CD8-positive, alpha-beta T cell (primary cell): ENCODE measurements at regions of chr7 and their contacts with region 1.

Region 1: DNA sequence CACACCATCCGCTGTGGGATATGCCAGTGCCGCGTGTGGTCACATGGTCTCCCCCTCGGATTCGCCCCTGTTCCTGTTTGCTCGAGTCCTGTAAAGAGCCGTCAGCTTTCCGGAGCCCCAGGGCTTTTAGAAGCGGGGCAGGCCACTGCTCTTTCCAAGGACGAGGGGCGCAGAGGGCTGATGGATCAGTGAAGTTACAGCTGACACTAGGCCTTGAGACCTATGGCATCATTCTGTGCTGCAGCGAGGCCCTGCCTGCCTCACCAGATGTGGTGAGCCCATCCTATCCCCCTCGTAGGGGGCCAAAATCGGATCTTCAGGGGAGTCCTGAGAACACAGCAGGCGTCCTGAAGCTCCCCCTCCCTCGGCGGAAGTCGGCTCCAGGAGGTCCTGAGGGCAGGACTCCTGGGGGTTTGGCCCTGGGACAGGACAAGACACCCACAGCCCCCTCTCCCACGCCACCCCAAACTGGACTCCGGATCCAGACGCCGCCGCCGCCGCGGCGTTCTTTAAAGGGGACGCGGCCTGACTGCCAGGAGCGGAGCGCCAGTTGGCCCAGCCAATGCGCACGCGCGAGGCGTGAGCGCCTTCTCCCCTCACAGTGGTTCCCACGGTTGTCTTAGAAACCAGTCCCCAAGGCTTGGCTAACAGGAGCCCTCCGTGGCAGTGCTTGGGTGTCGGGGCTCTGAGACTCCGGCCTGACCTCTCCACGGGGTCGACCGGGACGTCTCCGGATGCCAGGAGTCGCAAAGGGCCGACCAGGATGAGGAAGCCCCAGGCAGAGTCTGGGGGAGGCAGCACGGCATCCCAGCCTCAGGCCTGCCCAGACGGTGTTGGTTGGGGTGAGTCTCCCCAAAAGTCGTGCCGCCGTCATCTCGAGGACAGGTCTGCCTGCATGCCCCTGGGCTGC is 371.7 kb downstream of the ZNF716 start:
- DNase-seq: no peak
- ATAC-seq: no peak
- H3K4me3 ChIP-seq: no peak overlapping the region
- H3K4me3 Mint-ChIP-seq: no peak overlapping the region
- H3K27ac ChIP-seq: no peak overlapping the region
- H3K27ac Mint-ChIP-seq: no peak overlapping the region
- H3K4me1 ChIP-seq: no peaks in the 10 kb centered on the region
- H3K4me1 Mint-ChIP-seq: no peaks in the 10 kb centered on the region
- H3K27me3 ChIP-seq: no peaks in the 10 kb centered on the region
- H3K27me3 Mint-ChIP-seq: no peaks in the 10 kb centered on the region
- CTCF ChIP-seq: no peak

Region 2: DNA sequence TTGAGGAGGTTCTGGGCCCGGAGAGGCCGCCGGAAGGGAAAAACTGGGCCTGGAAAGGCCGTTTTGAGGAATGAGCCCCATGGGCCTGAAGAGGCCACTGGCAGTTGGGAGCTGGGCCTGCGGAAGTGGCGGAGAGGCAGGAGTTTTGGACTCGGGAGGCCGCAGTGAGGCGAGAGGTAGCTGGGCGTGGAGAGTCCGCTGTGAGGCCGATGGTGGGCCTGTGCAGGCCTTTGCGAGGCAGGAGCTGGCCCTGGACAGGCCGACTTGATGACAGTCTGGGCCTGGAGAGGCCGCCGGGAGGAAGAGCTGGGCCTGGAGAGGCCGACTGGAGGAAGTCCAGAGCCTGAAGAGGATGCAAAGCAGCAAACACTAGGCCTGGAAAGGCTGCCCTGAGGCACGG is 1446.5 kb before region 1 on chr7:
- CTCF ChIA-PET with region 1: no interaction called
- POLR2A ChIA-PET with region 1: no interaction called
- intact Hi-C with region 1: no loop called
- DNase-seq: no peak
- ATAC-seq: no peak
- H3K4me3 ChIP-seq: no peak overlapping the region
- H3K4me3 Mint-ChIP-seq: no peak overlapping the region
- H3K27ac ChIP-seq: no peak overlapping the region
- H3K27ac Mint-ChIP-seq: no peak overlapping the region
- H3K4me1 ChIP-seq: no peaks in the 10 kb centered on the region
- H3K4me1 Mint-ChIP-seq: no peaks in the 10 kb centered on the region
- H3K27me3 ChIP-seq: no peaks in the 10 kb centered on the region
- H3K27me3 Mint-ChIP-seq: no peaks in the 10 kb centered on the region
- CTCF ChIP-seq: no peak

Region 3: DNA sequence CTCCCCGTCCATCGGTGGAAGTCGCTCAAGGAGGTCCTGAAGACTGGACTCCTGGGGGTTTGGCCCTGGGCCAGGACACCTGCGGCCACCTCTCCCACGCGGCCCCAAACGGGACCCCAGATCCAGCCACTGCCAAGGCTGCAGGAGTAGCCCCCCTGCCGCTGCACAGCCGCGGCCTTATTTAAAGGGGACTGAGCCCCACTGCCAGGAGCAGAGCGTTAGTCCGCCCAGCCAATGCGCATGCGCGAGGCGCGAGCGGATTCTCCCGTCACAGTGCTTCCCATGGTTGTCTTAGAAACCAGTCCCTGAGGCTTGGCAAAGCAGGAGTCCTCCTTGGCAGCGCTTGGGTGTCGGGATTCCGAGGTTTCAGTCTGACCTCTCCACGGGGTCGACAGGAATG is 51.7 kb before region 1 on chr7:
- CTCF ChIA-PET with region 1: no interaction called
- POLR2A ChIA-PET with region 1: no interaction called
- intact Hi-C with region 1: loop called in 1 of 2 experiments (anchors 10 kb)
- DNase-seq: no peak
- ATAC-seq: no peak
- H3K4me3 ChIP-seq: no peak overlapping the region
- H3K4me3 Mint-ChIP-seq: no peak overlapping the region
- H3K27ac ChIP-seq: no peak overlapping the region
- H3K27ac Mint-ChIP-seq: no peak overlapping the region
- H3K4me1 ChIP-seq: no peaks in the 10 kb centered on the region
- H3K4me1 Mint-ChIP-seq: no peaks in the 10 kb centered on the region
- H3K27me3 ChIP-seq: no peaks in the 10 kb centered on the region
- H3K27me3 Mint-ChIP-seq: no peaks in the 10 kb centered on the region
- CTCF ChIP-seq: no peak